ENCODE measurements at regions of chr6 and their contacts with region 1.

Region 1: DNA sequence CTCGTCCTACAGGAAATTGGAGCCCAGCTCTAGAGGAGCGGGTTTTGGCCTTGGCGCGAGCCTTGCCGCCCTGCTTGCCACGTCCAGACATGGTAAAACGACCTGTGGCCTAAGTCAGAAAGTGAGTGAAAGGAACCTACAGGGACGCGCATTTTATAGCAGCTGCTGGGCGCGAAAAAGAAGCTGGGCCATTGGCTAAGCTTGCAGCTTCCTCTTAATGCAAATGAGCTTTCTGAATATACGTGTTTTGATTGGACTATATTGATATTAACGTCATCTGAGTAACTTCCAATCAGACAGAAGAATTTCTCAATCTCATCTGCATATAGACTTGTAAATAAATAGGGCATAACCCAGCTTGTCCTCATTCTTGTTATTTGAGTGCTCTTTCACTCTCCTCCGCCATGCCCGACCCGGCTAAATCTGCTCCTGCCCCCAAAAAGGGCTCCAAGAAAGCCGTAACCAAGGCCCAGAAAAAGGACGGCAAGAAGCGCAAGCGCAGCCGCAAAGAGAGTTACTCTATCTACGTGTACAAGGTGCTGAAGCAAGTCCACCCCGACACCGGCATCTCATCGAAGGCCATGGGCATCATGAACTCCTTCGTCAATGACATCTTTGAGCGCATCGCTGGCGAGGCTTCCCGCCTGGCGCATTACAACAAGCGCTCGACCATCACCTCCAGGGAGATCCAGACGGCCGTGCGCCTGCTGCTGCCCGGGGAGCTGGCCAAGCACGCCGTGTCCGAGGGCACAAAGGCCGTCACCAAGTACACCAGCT is 18.9 kb downstream of the OR2B2 start:
- DNase-seq: peak; percentile 76 to 98 (median 85)
- ATAC-seq: peak; percentile 73
- H3K4me3 ChIP-seq: peak overlapping the region; percentile 74
- H3K4me3 Mint-ChIP-seq: no peak overlapping the region
- H3K27ac ChIP-seq: peak overlapping the region; percentile 84 to 86
- H3K27ac Mint-ChIP-seq: no peak overlapping the region
- H3K4me1 ChIP-seq: peaks cover 49% of the 10 kb centered on the region
- H3K4me1 Mint-ChIP-seq: peaks cover 29% of the 10 kb centered on the region
- H3K27me3 ChIP-seq: no peaks in the 10 kb centered on the region
- H3K27me3 Mint-ChIP-seq: no peaks in the 10 kb centered on the region
- CTCF ChIP-seq: no peak

Region 2: GRCh38 chr6:26025894-26026832 is 1867.1 kb before region 1 on chr6:
- CTCF ChIA-PET with region 1: no interaction called
- POLR2A ChIA-PET with region 1: interaction called, 50 read pairs
- intact Hi-C with region 1: loop called in 1 of 2 experiments (anchors 10 kb)
- DNase-seq: peak; percentile 75 to 98 (median 88)
- ATAC-seq: peak; percentile 45
- H3K4me3 ChIP-seq: peak overlapping the region; percentile 70
- H3K4me3 Mint-ChIP-seq: peak overlapping the region; percentile 90
- H3K27ac ChIP-seq: peak overlapping the region; percentile 86 to 88
- H3K27ac Mint-ChIP-seq: peak overlapping the region; percentile 97
- H3K4me1 ChIP-seq: peaks cover 34% of the 10 kb centered on the region
- H3K4me1 Mint-ChIP-seq: peaks cover 42% of the 10 kb centered on the region
- H3K27me3 ChIP-seq: no peaks in the 10 kb centered on the region
- H3K27me3 Mint-ChIP-seq: no peaks in the 10 kb centered on the region
- CTCF ChIP-seq: peak; percentile 86

Region 3: GRCh38 chr6:26156076-26156849 is 1737.0 kb before region 1 on chr6:
- CTCF ChIA-PET with region 1: no interaction called
- POLR2A ChIA-PET with region 1: interaction called, 77 read pairs
- intact Hi-C with region 1: no loop called
- DNase-seq: peak; percentile 76 to 94 (median 88)
- ATAC-seq: peak; percentile 33
- H3K4me3 ChIP-seq: peak overlapping the region; percentile 92
- H3K4me3 Mint-ChIP-seq: peak overlapping the region; percentile 99
- H3K27ac ChIP-seq: peak overlapping the region; percentile 67 to 91
- H3K27ac Mint-ChIP-seq: peak overlapping the region; percentile 97
- H3K4me1 ChIP-seq: peaks cover 37% of the 10 kb centered on the region
- H3K4me1 Mint-ChIP-seq: peaks cover 40% of the 10 kb centered on the region
- H3K27me3 ChIP-seq: no peaks in the 10 kb centered on the region
- H3K27me3 Mint-ChIP-seq: peaks cover 12% of the 10 kb centered on the region
- CTCF ChIP-seq: no peak

Region 4: GRCh38 chr6:26607434-26608230 is 1285.6 kb before region 1 on chr6:
- CTCF ChIA-PET with region 1: no interaction called
- POLR2A ChIA-PET with region 1: no interaction called
- intact Hi-C with region 1: loop called (anchors 10 kb)
- DNase-seq: peak; percentile 21 to 83 (median 49)
- ATAC-seq: peak; percentile 99
- H3K4me3 ChIP-seq: peak overlapping the region; percentile 42
- H3K4me3 Mint-ChIP-seq: peak overlapping the region; percentile 75
- H3K27ac ChIP-seq: no peak overlapping the region
- H3K27ac Mint-ChIP-seq: peak overlapping the region; percentile 21
- H3K4me1 ChIP-seq: peaks cover 11% of the 10 kb centered on the region
- H3K4me1 Mint-ChIP-seq: peaks cover 11% of the 10 kb centered on the region
- H3K27me3 ChIP-seq: peaks cover 0 to 2% of the 10 kb centered on the region in 2 experiments
- H3K27me3 Mint-ChIP-seq: peaks cover 9% of the 10 kb centered on the region
- CTCF ChIP-seq: peak; percentile 79

Region 5: GRCh38 chr6:27241443-27241842 is 651.8 kb before region 1 on chr6:
- CTCF ChIA-PET with region 1: no interaction called
- POLR2A ChIA-PET with region 1: no interaction called
- intact Hi-C with region 1: no loop called
- DNase-seq: no peak
- ATAC-seq: no peak
- H3K4me3 ChIP-seq: no peak overlapping the region
- H3K4me3 Mint-ChIP-seq: no peak overlapping the region
- H3K27ac ChIP-seq: no peak overlapping the region
- H3K27ac Mint-ChIP-seq: no peak overlapping the region
- H3K4me1 ChIP-seq: peaks cover 10% of the 10 kb centered on the region
- H3K4me1 Mint-ChIP-seq: peaks cover 23% of the 10 kb centered on the region
- H3K27me3 ChIP-seq: peaks cover 48 to 75% of the 10 kb centered on the region in 2 experiments
- H3K27me3 Mint-ChIP-seq: peaks cover 68% of the 10 kb centered on the region
- CTCF ChIP-seq: no peak

Region 6: DNA sequence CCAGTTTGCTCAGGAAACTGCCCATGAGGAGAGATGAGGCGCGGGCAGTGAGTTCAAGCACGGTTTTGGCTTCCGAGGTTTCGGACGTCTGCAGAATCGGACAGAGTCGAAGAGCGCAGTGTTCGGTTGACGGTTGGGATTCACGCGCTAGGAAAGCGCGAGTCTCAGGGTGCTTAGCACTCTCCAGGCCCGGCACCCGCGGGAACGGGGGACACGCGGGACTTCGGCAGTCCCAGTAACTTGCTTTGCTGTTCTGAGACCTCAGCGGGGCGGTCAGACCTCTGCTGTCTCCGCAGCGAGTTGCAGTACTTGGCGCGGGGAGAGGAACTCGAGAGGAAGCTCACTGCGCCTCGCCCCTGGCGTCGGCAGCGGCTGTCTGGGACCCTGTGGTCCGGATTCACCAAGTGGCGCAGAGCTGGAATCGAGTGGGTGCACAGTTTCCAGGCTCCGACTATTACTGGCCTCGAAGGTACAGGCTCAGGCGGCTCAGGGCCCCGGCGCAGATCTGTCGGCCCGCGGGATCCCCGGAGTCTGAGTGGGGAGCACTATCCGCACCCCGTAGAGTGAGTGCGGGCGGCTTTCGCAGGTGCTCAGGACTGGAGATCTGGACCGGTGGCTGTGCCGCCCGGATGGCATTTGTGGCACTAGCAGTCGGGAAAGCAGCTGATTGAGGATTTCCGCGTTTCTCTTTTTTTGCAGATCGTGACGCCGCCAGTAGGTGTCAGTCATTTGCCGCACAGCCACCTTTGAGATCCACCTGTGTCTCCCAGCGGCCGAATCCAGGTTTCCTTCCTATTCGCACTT is 580.9 kb before region 1 on chr6 and contains the start of gene POM121L2:
- CTCF ChIA-PET with region 1: interaction called, 3 read pairs
- POLR2A ChIA-PET with region 1: interaction called, 4 read pairs
- intact Hi-C with region 1: loop called in 1 of 2 experiments (anchors 2 kb)
- DNase-seq: peak; percentile 23 to 81 (median 52)
- ATAC-seq: peak; percentile 66
- H3K4me3 ChIP-seq: peak within 1 kb of the TSS; percentile 71
- H3K4me3 Mint-ChIP-seq: peak within 1 kb of the TSS; percentile 83
- H3K27ac ChIP-seq: no peak within 1 kb of the TSS
- H3K27ac Mint-ChIP-seq: no peak within 1 kb of the TSS
- H3K4me1 ChIP-seq: peaks cover 12% of the 10 kb centered on the region
- H3K4me1 Mint-ChIP-seq: peaks cover 6% of the 10 kb centered on the region
- H3K27me3 ChIP-seq: peaks cover 35 to 68% of the 10 kb centered on the region in 2 experiments
- H3K27me3 Mint-ChIP-seq: peaks cover 93% of the 10 kb centered on the region
- CTCF ChIP-seq: peak; percentile 82
- total RNA-seq, gene POM121L2: not detected

Region 7: DNA sequence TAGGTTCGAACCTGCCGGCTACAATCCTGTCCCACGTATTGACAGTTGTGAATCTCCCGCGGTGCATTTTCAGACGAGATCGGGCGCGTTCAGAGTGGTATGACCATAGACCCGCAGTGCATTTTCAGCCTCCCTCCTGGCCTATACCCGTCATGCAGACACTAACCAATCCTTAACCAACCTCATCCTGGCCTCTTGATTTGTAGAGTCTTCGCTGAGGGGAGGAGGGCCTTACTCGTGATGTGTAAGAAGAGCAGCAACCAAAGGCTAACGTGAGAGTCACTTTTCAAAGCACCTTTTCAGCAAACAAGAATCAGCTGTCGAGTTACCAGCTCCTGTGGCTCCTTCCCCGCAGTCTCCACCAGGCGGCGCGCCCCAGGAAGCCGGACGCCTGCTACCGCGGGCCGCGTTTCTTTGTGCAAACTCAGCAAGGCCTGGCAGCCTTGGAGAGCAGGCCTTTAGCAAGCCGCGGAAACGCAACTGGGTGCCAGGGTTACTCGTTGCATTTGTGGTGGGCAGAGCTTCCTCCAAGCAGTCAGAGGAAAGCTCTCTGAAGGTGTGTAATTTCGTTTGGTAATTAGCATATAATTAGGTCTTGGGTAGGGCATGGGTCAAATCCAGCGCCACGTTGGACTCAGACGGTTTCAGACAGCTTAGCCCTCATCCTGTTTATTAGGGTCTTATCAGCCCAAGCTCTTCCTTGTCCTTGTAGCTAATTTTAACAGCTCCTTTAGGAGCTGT is 120.8 kb before region 1 on chr6:
- CTCF ChIA-PET with region 1: interaction called, 60 read pairs
- POLR2A ChIA-PET with region 1: interaction called, 53 read pairs
- intact Hi-C with region 1: loop called (anchors 1 kb)
- DNase-seq: peak; percentile 70 to 92 (median 82)
- ATAC-seq: peak; percentile 97
- H3K4me3 ChIP-seq: no peak overlapping the region
- H3K4me3 Mint-ChIP-seq: peak overlapping the region; percentile 36
- H3K27ac ChIP-seq: no peak overlapping the region
- H3K27ac Mint-ChIP-seq: no peak overlapping the region
- H3K4me1 ChIP-seq: peaks cover 9% of the 10 kb centered on the region
- H3K4me1 Mint-ChIP-seq: peaks cover 9% of the 10 kb centered on the region
- H3K27me3 ChIP-seq: peaks cover 0 to 10% of the 10 kb centered on the region in 2 experiments
- H3K27me3 Mint-ChIP-seq: peaks cover 18% of the 10 kb centered on the region
- CTCF ChIP-seq: peak; percentile 90

Region 8: GRCh38 chr6:27864906-27865849 is 28.1 kb before region 1 on chr6:
- CTCF ChIA-PET with region 1: interaction called, 50 read pairs
- POLR2A ChIA-PET with region 1: interaction called, 1,297 read pairs
- intact Hi-C with region 1: no loop called
- DNase-seq: peak in 13 of 14 experiments; percentile 35 to 97 (median 61)
- ATAC-seq: peak; percentile 83
- H3K4me3 ChIP-seq: peak overlapping the region; percentile 59
- H3K4me3 Mint-ChIP-seq: peak overlapping the region; percentile 100
- H3K27ac ChIP-seq: peak overlapping the region; percentile 54 to 78
- H3K27ac Mint-ChIP-seq: peak overlapping the region; percentile 93
- H3K4me1 ChIP-seq: peaks cover 38% of the 10 kb centered on the region
- H3K4me1 Mint-ChIP-seq: peaks cover 41% of the 10 kb centered on the region
- H3K27me3 ChIP-seq: no peaks in the 10 kb centered on the region
- H3K27me3 Mint-ChIP-seq: peaks cover 3% of the 10 kb centered on the region
- CTCF ChIP-seq: no peak